ENCODE measurements at regions of chr1 and their contacts with region 1.

Region 1: GRCh38 chr1:92968138-92969032 is 7.1 kb upstream of the DIPK1A start:
- DNase-seq: peak in 6 of 35 experiments; percentile 11 to 71 (median 28)
- ATAC-seq: peak in 3 of 4 experiments; percentile 35 to 43 (median 43)
- H3K4me3 ChIP-seq: no peak overlapping the region
- H3K4me3 Mint-ChIP-seq: no peak overlapping the region
- H3K27ac ChIP-seq: no peak overlapping the region
- H3K27ac Mint-ChIP-seq: peak overlapping the region; percentile 29 to 66
- H3K4me1 ChIP-seq: peaks cover 38 to 48% of the 10 kb centered on the region in 2 experiments
- H3K4me1 Mint-ChIP-seq: peaks cover 25 to 36% (median 26%) of the 10 kb centered on the region in 3 donors
- H3K27me3 ChIP-seq: no peaks in the 10 kb centered on the region
- H3K27me3 Mint-ChIP-seq: no peaks in the 10 kb centered on the region

Region 2: DNA sequence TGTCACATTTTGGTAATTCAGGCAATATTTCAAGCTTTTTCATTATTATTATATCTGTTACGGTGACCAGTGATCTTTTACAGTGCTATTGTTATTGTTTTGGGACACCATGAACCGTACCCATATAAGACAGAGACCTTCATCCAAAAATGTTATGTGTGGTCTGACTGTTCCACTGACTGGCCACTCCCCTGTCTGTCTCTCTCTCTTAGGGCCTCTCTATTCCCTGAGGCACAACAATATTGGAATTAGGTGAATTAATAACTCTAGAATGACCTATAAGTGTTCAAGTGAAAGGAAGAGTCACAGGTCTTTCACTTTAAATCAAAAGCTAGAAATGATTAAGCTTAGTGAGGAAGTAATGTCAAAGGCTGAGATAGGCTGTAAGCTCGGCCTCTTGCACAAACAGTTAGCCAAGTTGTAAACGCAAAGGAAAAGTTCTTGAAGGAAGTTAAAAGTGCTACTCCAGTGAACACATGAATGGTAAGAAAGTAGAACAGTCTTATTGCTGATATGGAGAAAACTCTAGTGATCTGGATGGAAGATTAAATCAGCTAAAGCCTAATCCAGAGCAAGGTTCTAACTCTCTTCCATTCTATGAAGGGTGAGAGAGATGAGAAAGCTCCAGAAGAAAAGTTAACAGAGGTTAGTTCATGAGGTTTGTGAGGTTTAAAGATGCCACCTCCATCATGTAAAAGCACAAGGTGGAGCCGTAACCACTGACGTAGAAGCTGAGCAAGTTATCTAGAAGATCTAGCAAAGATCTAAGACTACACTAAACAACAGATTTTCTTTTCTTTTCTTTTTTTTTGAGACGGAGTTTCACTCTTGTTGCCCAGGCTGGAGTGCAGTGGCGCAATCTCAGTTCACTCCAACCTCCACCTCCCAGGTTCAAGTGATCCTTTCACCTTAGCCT is 12.6 kb after region 1 on chr1:
- CTCF ChIA-PET with region 1: interaction called, 13 to 72 read pairs
- POLR2A ChIA-PET with region 1: interaction called, 15 to 44 read pairs
- DNase-seq: peak in 33 of 35 experiments; percentile 35 to 90 (median 68)
- ATAC-seq: peak; percentile 90 to 98 (median 94)
- H3K4me3 ChIP-seq: peak overlapping the region in 1 of 2 donors; percentile 6
- H3K4me3 Mint-ChIP-seq: peak overlapping the region; percentile 25 to 63 (median 58)
- H3K27ac ChIP-seq: peak overlapping the region; percentile 94
- H3K27ac Mint-ChIP-seq: peak overlapping the region; percentile 96 to 100
- H3K4me1 ChIP-seq: peaks cover 9 to 29% of the 10 kb centered on the region in 2 experiments
- H3K4me1 Mint-ChIP-seq: peaks cover 38 to 47% (median 46%) of the 10 kb centered on the region in 3 donors
- H3K27me3 ChIP-seq: no peaks in the 10 kb centered on the region
- H3K27me3 Mint-ChIP-seq: no peaks in the 10 kb centered on the region

Measured in T-cell (primary cell).